Lower leg skin (tissue), 4 donors: ENCODE measurements at regions of chr9 and their contacts with region 1.

Region 1: GRCh38 chr9:128286440-128286839 is 10.4 kb downstream of the SWI5 start:
- DNase-seq: no peak
- H3K4me3 ChIP-seq: no peak overlapping the region
- CTCF ChIP-seq: no peak
- POLR2A ChIP-seq: no peak

Region 2: DNA sequence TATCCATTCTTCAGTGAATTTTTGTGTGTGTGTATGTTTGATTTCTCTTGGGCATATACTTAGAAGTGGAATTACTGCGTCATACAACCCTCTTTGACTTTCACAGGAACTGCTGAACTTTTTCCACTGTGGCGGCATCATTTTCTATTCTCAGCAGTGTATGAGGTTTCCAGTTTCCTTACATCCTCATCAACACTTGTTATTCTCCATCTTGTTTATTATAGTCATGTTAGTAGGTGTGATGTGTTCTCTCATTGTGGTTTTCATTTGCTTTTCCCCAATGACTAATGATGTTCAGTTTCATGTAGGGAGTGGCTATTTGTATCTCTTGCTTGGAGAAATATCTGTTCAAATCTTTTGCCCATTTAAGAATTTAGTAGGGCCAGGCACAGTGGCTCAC is 859.7 kb before region 1 on chr9:
- intact Hi-C with region 1: no loop called
- DNase-seq: no peak
- H3K4me3 ChIP-seq: no peak overlapping the region
- CTCF ChIP-seq: no peak
- POLR2A ChIP-seq: no peak

Region 3: GRCh38 chr9:127955294-127956035 is 331.0 kb before region 1 on chr9:
- intact Hi-C with region 1: no loop called
- DNase-seq: peak; percentile 92 to 94
- H3K4me3 ChIP-seq: no peak overlapping the region
- CTCF ChIP-seq: peak in 1 of 3 donors; percentile 13
- POLR2A ChIP-seq: no peak

Region 4: DNA sequence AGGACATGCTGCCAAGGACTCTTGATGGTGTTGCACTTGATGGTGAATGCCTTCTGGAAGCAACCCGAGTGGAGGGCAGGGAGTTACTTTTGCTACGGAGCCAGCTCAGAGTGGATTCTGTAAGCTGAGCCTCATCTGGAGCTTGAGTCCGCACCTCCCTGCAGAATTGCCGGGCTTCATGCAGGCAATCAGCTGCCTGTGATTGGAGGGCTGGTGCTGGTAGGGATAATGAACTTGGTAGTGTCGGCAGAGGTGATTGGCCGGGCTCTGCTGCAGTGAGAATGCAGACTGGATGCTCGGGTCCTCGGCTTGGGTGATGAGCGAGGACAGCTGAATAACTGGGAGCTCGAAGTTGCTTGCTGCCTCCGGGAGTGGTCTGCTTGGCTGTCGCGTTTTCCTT is 195.3 kb before region 1 on chr9:
- intact Hi-C with region 1: no loop called
- DNase-seq: peak; percentile 55 to 91
- H3K4me3 ChIP-seq: no peak overlapping the region
- CTCF ChIP-seq: no peak
- POLR2A ChIP-seq: no peak

Region 5: DNA sequence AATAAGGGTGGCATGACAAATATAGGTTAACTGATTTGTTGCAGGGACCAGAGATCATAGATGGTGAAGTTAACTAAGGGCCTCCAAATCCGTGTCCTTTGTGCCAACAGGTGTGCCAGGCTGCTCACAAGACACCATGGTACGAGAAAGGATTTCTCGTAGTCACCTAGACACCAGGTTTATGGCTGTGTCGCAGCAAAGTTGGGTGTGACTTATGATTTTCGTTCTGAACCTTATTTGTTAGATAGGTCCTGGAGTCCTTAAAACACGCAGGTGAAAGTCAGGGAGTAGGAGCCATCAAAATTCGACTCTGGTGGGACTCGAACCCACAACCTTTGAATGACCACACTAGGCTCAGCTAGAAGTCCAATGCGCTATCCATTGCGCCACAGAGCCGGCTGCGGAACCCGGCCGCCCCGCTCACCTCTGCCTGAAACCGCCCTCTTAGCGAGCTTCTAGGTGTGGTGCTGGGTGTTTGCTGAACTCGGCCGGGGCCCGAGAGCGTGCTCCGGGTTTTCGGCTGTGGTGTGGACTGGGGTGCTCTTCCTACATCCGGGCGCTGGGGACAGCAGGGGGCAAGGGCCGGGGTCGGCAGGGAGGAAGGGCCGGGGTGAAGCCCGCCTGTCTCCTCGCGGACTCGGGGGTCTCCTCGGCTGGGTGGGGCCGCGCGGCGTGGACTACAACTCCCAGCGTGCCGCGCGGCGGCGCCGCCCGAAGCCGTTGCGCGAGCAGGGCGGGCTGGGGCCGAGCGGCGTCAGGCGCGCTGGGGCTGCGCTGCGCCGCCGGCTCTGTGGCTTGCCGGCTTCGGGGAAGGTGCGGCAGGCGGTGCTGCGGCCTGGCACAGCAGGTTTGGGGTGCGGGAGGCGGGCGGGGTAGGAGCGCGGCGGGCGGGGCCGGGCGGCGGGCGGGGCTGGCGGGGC is 53.6 kb after region 1 on chr9 and contains the start of gene SLC27A4:
- intact Hi-C with region 1: loop called (anchors 5 kb)
- DNase-seq: peak; percentile 48 to 90
- H3K4me3 ChIP-seq: peak within 1 kb of the TSS; percentile 58
- CTCF ChIP-seq: no peak
- POLR2A ChIP-seq: no peak
- total RNA-seq, gene SLC27A4: 64.7 to 105 (median 73.3) TPM

Region 6: GRCh38 chr9:128628471-128629048 is 342.1 kb after region 1 on chr9:
- intact Hi-C with region 1: loop called (anchors 5 kb)
- DNase-seq: peak in 1 of 2 donors; percentile 91
- H3K4me3 ChIP-seq: no peak overlapping the region
- CTCF ChIP-seq: no peak
- POLR2A ChIP-seq: no peak